ENCODE measurements at regions of chr14 and their contacts with region 1.

Region 1: DNA sequence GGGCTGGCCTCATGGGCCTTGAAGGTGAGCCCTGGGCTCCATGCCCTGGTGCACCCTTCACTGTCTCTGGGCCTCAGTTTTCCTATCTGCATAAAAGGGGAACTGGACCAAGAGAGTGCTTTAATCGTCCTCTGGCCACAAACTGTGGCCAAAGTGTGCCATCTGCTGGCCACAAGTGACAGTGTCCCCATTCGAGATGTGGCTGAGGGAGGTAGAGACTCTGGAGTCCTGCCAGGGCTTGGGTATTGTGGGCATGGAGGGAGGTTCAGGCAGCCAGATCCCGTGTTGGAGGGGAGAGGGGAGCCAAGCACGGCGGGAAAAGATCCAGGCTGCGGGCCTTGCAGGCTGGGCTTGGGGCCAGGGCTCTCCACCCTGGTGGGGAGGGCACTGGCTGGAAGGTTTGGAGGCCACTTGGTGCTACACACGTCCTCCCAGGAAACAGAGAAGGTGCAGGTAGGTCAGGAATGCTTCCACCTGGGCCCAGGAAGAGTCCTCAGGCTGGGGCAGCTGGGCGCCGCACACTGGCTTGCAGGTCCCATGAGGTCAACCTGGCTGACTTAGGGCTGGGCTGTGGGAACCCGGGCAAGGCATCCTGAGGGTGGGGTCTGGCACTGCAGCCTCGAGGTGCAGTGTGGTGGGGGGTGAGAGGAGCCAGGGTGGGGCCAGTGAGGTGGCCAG is 7.3 kb upstream of the KIF26A start:
- DNase-seq: peak; percentile 61 to 72 (median 68)
- ATAC-seq: peak; percentile 75 to 91 (median 90)
- H3K4me3 ChIP-seq: no peak overlapping the region
- H3K27ac ChIP-seq: no peak overlapping the region
- H3K4me1 ChIP-seq: no peaks in the 10 kb centered on the region
- H3K27me3 ChIP-seq: peaks cover 0 to 8% of the 10 kb centered on the region in 2 donors
- CTCF ChIP-seq: peak; percentile 67 to 94 (median 81)
- POLR2A ChIP-seq: no peak

Region 2: DNA sequence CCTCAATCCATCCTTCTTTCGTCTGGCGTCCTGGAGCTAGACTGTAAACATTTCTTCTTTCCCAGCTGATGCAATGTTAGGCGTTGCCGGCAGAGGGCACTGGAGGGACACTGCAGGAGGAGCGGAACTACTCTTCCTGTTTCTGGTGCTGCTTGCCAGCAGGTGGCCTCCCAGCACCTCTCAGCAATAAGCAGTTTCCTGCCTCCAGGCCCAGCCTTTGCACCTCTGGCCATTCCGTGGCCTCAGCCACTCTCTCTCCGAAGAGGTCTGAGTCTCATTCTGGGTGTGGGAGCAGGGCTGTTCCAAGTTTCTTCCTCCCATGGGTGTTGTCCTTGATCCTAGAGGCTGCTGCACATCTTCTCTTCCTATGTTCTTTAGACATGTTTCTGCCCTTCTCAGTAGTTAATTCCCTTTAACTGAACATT is 53.1 kb before region 1 on chr14:
- intact Hi-C with region 1: loop called (anchors 5 kb)
- DNase-seq: peak; percentile 86 to 92 (median 91)
- ATAC-seq: peak; percentile 95 to 99 (median 98)
- H3K4me3 ChIP-seq: no peak overlapping the region
- H3K27ac ChIP-seq: no peak overlapping the region
- H3K4me1 ChIP-seq: peaks cover 0 to 7% (median 3%) of the 10 kb centered on the region in 4 donors
- H3K27me3 ChIP-seq: no peaks in the 10 kb centered on the region
- CTCF ChIP-seq: peak; percentile 100
- POLR2A ChIP-seq: no peak

Region 3: DNA sequence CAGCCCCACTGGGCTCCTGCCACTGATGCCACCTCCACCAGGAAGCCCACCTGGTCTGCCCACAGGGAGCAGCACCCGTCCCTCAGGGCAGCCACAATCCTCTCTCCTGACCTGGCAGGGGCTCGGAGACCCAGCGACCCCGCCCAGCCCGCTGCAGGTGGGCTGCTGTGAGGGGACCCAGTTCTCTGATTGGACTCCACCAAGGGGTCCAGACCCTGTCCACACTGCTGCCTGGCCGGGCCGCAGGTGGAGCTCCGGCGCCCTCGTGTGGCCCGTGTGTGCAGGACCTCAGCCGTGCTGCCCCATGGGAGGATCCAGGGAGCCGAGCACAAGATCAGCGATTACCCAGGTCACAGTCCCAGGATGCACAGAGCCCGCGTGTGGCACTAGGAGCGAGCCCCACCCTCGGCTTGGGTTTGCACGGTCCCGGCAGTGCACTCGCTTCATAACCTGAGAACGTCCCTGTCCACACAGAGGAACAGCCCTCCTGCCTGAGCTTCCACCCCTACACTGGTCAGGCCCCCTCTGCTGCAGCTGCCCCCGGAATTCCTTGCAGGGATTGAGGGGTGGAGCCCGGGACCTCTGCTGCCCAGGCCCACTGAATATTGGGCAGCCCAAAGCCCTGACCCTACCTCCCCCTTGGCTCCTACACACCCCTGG is 508.9 kb after region 1 on chr14:
- intact Hi-C with region 1: loop called (anchors 5 to 10 kb)
- DNase-seq: peak; percentile 71 to 78 (median 74)
- ATAC-seq: peak; percentile 86 to 92 (median 88)
- H3K4me3 ChIP-seq: no peak overlapping the region
- H3K27ac ChIP-seq: no peak overlapping the region
- H3K4me1 ChIP-seq: peaks cover 0 to 9% (median 3%) of the 10 kb centered on the region in 4 donors
- H3K27me3 ChIP-seq: no peaks in the 10 kb centered on the region
- CTCF ChIP-seq: peak; percentile 84 to 99 (median 95)
- POLR2A ChIP-seq: no peak

Measured in right lobe of liver (tissue), 6 donors.